Activated B cell treated with CpG ODN at 0.5 μM for 24 hours (primary cell): ENCODE measurements at regions of chr3 and their contacts with region 1.

Region 1: DNA sequence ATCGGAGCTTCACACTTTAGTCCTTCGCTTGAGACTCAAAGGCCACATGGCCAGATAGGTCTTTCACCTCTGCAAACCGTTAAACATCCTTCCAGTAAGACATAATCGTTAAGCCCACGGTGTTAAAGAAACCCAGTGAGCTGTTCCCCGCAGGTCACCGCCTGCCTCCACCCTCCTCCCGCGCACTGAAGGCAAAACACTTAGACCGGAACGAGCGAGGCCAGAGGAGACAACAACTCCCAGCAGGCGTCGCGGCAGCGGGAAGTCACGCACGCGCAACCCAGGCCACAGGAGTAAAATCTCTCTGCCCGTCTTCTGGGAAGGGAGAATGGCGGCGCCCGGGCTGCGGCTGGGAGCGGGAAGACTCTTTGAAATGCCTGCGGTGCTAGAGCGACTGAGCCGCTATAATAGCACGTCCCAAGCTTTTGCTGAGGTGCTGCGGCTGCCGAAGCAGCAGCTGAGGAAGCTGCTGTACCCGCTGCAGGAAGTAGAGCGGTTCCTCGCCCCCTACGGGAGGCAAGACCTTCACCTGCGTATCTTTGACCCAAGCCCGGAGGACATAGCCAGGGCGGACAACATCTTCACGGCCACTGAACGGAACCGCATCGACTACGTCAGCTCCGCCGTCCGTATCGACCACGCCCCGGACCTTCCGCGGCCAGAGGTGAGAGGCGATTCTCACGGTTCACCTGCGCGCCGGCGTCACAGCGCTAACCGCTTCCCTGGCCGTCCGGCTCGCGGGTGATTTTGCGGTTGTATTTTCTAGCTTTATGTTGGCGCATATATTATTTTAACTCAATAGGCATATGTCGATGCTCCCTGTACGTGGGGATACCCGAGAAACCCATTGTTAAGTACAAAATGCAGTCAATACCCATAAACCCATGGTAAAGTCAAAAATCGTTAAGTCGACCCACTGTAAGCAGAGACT is at the start of gene GTPBP8:
- DNase-seq: peak; percentile 79
- ATAC-seq: peak; percentile 86
- H3K4me3 Mint-ChIP-seq: peak within 1 kb of the TSS; percentile 92
- H3K27ac Mint-ChIP-seq: peak within 1 kb of the TSS; percentile 92
- H3K4me1 Mint-ChIP-seq: peaks cover 27% of the 10 kb centered on the region
- H3K27me3 Mint-ChIP-seq: no peaks in the 10 kb centered on the region
- CTCF ChIP-seq: no peak
- total RNA-seq, gene GTPBP8: 14.3 and 18.1 TPM in 2 replicates

Region 2: DNA sequence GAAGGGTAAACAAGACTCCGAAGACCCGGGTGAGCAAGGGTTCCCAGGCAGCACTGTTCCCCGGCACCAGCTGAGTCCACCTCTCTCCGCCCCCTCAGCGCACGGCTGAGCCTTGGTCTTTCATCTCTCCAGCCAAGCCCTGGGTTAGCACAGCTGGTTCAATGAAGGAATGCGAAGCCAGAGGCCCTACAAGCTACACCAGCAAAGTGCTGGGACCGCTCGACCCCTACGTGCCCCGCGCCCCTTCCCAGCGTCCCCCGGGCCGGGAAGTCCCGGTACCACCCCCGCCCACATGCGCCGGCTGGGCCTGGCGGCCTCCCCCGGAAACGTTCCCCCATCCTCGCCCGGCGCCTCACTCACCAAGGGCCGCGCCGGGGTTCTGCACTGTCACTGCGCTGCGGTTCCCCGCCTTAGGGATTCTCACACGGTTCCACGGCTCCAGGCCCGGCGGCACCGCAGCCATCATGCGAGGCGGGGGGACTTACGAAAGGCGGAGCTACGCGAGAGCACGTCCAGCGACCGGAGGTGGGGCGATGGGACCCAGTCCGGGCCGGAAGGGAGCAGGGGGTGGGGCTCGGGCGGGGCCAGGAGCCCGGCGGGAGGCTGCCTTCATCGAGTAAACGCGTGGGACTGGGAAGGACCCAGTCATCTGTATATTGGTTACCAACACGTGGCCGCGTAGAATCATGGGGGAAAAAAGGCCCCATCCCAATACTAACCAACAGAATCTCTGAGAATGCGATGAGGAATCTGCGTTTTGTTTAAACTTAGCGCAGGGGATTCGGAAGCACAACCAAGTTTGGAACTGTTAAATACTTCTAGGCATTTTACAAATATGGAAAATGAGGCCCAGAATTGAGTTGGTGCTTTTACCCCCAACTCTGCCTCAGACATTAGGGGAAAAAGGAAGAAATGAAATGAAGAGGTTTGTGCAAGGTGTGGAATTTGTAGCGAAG is 28.5 kb after region 1 on chr3:
- CTCF ChIA-PET with region 1: interaction called, 4 read pairs
- POLR2A ChIA-PET with region 1: interaction called, 47 read pairs
- intact Hi-C with region 1: loop called (anchors 1 kb)
- DNase-seq: peak; percentile 81
- ATAC-seq: peak; percentile 87
- H3K4me3 Mint-ChIP-seq: peak overlapping the region; percentile 92
- H3K27ac Mint-ChIP-seq: peak overlapping the region; percentile 95
- H3K4me1 Mint-ChIP-seq: peaks cover 54% of the 10 kb centered on the region
- H3K27me3 Mint-ChIP-seq: no peaks in the 10 kb centered on the region
- CTCF ChIP-seq: no peak

Region 3: DNA sequence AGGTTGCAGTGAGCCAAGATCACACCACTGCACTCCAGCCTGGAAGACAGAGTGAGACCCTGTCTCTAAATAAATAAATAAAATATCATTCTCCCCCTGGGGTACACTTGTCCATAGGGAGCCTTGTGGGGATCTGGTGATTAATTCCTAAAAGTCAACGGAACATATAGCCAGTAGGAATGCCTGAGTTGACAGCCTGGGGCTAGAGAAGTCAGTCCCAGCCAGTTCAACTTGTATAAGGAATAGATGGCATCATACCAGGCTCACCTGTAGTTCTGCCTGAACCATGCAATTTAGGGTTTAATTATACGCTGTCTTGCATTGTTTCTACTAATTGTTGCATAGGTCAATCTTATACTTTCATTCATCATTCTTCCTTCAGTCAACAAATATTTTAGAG is 214.5 kb after region 1 on chr3:
- CTCF ChIA-PET with region 1: no interaction called
- POLR2A ChIA-PET with region 1: no interaction called
- intact Hi-C with region 1: no loop called
- DNase-seq: no peak
- ATAC-seq: no peak
- H3K4me3 Mint-ChIP-seq: no peak overlapping the region
- H3K27ac Mint-ChIP-seq: no peak overlapping the region
- H3K4me1 Mint-ChIP-seq: no peaks in the 10 kb centered on the region
- H3K27me3 Mint-ChIP-seq: peaks cover 44% of the 10 kb centered on the region
- CTCF ChIP-seq: no peak

Region 4: GRCh38 chr3:113606539-113607218 is 615.7 kb after region 1 on chr3:
- CTCF ChIA-PET with region 1: no interaction called
- POLR2A ChIA-PET with region 1: no interaction called
- intact Hi-C with region 1: no loop called
- DNase-seq: peak; percentile 26
- ATAC-seq: peak; percentile 96
- H3K4me3 Mint-ChIP-seq: peak overlapping the region; percentile 52
- H3K27ac Mint-ChIP-seq: peak overlapping the region; percentile 72
- H3K4me1 Mint-ChIP-seq: peaks cover 25% of the 10 kb centered on the region
- H3K27me3 Mint-ChIP-seq: no peaks in the 10 kb centered on the region
- CTCF ChIP-seq: no peak

Region 5: DNA sequence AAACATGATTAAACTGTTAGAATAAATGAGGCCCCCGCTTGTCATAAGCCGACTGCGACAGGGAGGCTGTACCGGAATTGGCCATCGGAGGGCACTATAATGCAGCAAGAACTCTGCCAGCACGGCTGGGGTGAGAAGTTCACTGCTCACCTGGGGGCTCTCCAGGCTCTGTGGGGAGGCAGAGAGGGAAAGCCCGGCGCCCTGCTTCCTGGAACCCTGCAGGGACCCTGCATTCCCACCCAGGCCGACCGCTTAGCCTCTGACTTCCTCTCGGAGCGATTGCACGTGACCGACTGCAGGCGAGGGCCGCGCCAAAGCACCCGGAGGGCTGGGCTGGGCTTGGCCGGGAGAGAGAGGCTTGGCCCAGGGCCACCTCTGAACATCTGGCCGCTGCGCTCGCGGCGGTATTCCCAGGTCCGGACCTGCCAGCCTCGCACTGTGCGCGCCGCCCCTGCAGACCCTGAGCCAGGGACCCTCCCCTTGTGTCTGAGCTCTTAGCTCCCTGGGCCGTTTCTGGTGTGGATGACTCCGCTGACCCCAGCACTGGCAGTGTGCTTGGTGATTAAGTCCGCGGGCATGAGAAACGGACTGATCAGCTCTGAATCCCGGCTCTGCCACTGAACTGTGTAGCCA is 1161.7 kb after region 1 on chr3:
- CTCF ChIA-PET with region 1: no interaction called
- POLR2A ChIA-PET with region 1: no interaction called
- intact Hi-C with region 1: no loop called
- DNase-seq: peak; percentile 78
- ATAC-seq: peak; percentile 98
- H3K4me3 Mint-ChIP-seq: peak overlapping the region; percentile 68
- H3K27ac Mint-ChIP-seq: peak overlapping the region; percentile 47
- H3K4me1 Mint-ChIP-seq: peaks cover 11% of the 10 kb centered on the region
- H3K27me3 Mint-ChIP-seq: no peaks in the 10 kb centered on the region
- CTCF ChIP-seq: peak; percentile 18

Region 6: DNA sequence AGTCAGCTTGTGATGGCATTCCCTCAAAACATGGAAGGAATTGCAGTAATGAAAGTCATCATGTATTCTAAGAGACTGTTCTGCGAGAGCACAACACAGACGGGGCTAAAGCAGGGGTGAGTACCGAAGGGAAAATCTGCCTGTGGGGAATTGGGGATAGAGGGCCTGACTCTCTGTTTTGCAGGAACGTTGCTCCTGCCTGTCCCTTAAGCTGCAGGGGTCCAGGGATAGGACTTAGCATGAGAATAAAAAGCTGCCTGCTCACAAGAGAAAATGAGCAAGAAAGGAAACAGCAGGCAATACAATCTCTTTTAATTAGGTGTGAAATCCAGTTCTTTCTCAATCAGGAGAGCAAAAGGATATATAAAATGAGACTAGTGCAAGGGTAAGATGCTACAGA is 1365.1 kb after region 1 on chr3:
- CTCF ChIA-PET with region 1: no interaction called
- POLR2A ChIA-PET with region 1: no interaction called
- intact Hi-C with region 1: no loop called
- DNase-seq: no peak
- ATAC-seq: no peak
- H3K4me3 Mint-ChIP-seq: no peak overlapping the region
- H3K27ac Mint-ChIP-seq: no peak overlapping the region
- H3K4me1 Mint-ChIP-seq: peaks cover 2% of the 10 kb centered on the region
- H3K27me3 Mint-ChIP-seq: no peaks in the 10 kb centered on the region
- CTCF ChIP-seq: no peak